ENCODE measurements at regions of chr9 and their contacts with region 1.

Region 1: GRCh38 chr9:38101423-38101822 is 32.4 kb upstream of the SHB start:
- DNase-seq: no peak
- ATAC-seq: no peak
- H3K4me3 ChIP-seq: no peak overlapping the region
- H3K27ac ChIP-seq: no peak overlapping the region
- H3K4me1 ChIP-seq: no peaks in the 10 kb centered on the region
- H3K27me3 ChIP-seq: no peaks in the 10 kb centered on the region
- CTCF ChIP-seq: no peak
- EP300 ChIP-seq: no peak
- POLR2A ChIP-seq: no peak
- RAD21 ChIP-seq: no peak

Region 2: DNA sequence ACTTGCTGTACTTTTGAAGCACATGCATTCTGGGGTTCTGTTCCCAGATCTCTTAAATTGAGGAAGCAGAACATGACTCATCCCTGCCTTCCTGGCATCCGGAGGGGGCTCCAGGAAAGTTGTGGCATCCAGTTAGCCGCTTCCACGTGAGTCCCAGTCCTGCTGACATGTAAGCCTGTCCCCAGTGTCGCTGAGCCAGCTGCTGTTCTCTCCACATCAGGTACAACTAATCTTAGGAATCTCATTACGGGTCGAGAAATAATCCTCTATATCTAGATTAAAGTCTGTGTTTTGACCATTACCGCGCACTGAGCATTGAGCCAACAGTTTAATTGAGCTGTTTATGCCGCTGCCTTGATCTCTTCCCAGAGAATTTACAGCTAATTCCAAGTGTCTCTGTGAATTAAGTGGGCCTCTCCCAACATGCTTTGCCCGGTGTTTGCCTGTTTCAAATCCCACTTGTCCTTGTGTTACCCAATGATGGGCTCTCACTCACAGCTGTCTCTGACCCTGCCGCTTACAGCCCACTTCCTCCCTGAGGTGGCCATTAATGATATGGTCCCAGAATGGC is 21.9 kb before region 1 on chr9:
- CTCF ChIA-PET with region 1: interaction called, 148 read pairs
- POLR2A ChIA-PET with region 1: no interaction called
- RAD21 ChIA-PET with region 1: interaction called, 3 read pairs
- SMC1A ChIA-PET with region 1: interaction called, 359 read pairs
- in situ Hi-C with region 1: no loop called
- intact Hi-C with region 1: loop called (anchors 2 kb)
- DNase-seq: no peak
- ATAC-seq: no peak
- H3K4me3 ChIP-seq: no peak overlapping the region
- H3K27ac ChIP-seq: no peak overlapping the region
- H3K4me1 ChIP-seq: no peaks in the 10 kb centered on the region
- H3K27me3 ChIP-seq: no peaks in the 10 kb centered on the region
- CTCF ChIP-seq: no peak
- EP300 ChIP-seq: no peak
- POLR2A ChIP-seq: no peak
- RAD21 ChIP-seq: no peak

Measured in GM12878 (cell line).